Mammary epithelial cell (primary cell): ENCODE measurements at regions of chr9 and their contacts with region 1.

Region 1: GRCh38 chr9:6723881-6724420 is 33.8 kb upstream of the KDM4C start:
- DNase-seq: no peak
- H3K4me3 ChIP-seq: no peak overlapping the region
- H3K27ac ChIP-seq: no peak overlapping the region
- H3K4me1 ChIP-seq: no peaks in the 10 kb centered on the region
- H3K27me3 ChIP-seq: no peaks in the 10 kb centered on the region
- CTCF ChIP-seq: no peak

Region 2: GRCh38 chr9:5743109-5743508 is 980.8 kb before region 1 on chr9:
- CTCF ChIA-PET with region 1: interaction called, 17 read pairs
- dilution Hi-C with region 1: no loop called
- in situ Hi-C with region 1: no loop called
- intact Hi-C with region 1: no loop called
- DNase-seq: no peak
- H3K4me3 ChIP-seq: no peak overlapping the region
- H3K27ac ChIP-seq: no peak overlapping the region
- H3K4me1 ChIP-seq: no peaks in the 10 kb centered on the region
- H3K27me3 ChIP-seq: no peaks in the 10 kb centered on the region
- CTCF ChIP-seq: no peak

Region 3: DNA sequence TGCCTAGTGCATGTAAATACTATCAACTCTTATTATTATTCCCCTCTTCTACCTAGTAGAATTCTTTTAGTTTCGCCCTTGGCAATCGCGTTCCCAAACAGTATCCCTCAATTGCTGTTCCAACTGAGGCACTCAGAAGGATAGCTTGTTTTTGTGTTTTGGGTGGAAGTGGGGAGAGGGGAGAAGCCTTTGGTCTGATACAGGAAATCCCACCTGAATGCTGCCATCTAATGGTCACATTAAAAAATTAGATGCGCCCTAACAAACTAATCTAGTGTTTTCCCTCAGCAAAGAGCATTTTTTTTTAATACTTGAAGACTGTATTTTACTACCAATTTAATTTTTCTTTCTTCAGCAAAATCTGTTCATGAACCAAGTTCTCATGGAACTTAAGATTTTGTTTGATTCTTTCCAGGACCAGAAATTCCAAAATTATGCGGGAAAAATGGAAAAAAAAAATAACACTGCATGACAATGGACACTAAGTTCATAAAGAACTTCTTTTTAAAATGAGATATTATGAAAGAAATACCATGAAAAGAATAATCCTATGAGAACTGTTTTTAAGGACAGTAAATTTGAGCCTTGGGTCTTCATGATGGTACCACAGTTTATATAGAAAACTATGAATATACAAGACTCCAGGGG is 56.2 kb before region 1 on chr9:
- CTCF ChIA-PET with region 1: no interaction called
- dilution Hi-C with region 1: no loop called
- in situ Hi-C with region 1: no loop called
- intact Hi-C with region 1: no loop called
- DNase-seq: no peak
- H3K4me3 ChIP-seq: no peak overlapping the region
- H3K27ac ChIP-seq: no peak overlapping the region
- H3K4me1 ChIP-seq: no peaks in the 10 kb centered on the region
- H3K27me3 ChIP-seq: no peaks in the 10 kb centered on the region
- CTCF ChIP-seq: peak; percentile 49 to 61